Caco-2 (cell line): ENCODE measurements at regions of chr10 and their contacts with region 1.

Region 1: GRCh38 chr10:121096617-121097461 is 245.7 kb downstream of the WDR11 start:
- DNase-seq: peak; percentile 86 to 87
- H3K4me3 ChIP-seq: no peak overlapping the region
- H3K4me3 Mint-ChIP-seq: peak overlapping the region; percentile 48
- H3K27ac Mint-ChIP-seq: peak overlapping the region; percentile 90
- H3K4me1 ChIP-seq: peaks cover 51% of the 10 kb centered on the region
- H3K4me1 Mint-ChIP-seq: peaks cover 38% of the 10 kb centered on the region
- H3K27me3 ChIP-seq: no peaks in the 10 kb centered on the region
- H3K27me3 Mint-ChIP-seq: no peaks in the 10 kb centered on the region
- CTCF ChIP-seq: no peak

Region 2: DNA sequence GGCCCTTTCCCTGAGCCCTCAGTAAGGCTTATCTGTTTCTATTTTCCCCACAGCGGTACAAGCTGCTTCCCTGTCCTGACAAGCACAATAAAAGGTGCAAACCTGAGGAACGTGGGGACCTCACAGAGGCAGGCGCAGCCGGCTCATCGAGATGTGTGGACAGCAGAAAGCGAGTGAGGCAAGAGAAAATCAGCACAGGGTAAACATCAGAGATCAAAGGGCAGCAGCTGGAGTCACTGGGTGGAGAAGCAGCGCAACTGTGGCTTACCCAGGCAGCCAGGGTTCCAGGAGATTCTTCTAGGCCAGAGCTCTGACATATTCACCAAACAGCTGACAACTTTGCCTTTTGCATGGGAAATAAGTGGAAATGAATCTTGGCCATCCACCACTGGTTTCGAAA is 33.1 kb before region 1 on chr10:
- CTCF ChIA-PET with region 1: no interaction called
- POLR2A ChIA-PET with region 1: no interaction called
- intact Hi-C with region 1: loop called (anchors 1 kb)
- DNase-seq: peak; percentile 89 to 90
- H3K4me3 ChIP-seq: no peak overlapping the region
- H3K4me3 Mint-ChIP-seq: peak overlapping the region; percentile 41
- H3K27ac Mint-ChIP-seq: peak overlapping the region; percentile 81
- H3K4me1 ChIP-seq: peaks cover 34% of the 10 kb centered on the region
- H3K4me1 Mint-ChIP-seq: peaks cover 31% of the 10 kb centered on the region
- H3K27me3 ChIP-seq: no peaks in the 10 kb centered on the region
- H3K27me3 Mint-ChIP-seq: no peaks in the 10 kb centered on the region
- CTCF ChIP-seq: no peak

Region 3: GRCh38 chr10:121178996-121179395 is 82.2 kb after region 1 on chr10:
- CTCF ChIA-PET with region 1: no interaction called
- POLR2A ChIA-PET with region 1: no interaction called
- intact Hi-C with region 1: no loop called
- DNase-seq: no peak
- H3K4me3 ChIP-seq: no peak overlapping the region
- H3K4me3 Mint-ChIP-seq: no peak overlapping the region
- H3K27ac Mint-ChIP-seq: no peak overlapping the region
- H3K4me1 ChIP-seq: peaks cover 10% of the 10 kb centered on the region; the same call in 1 of the 2 replicates
- H3K4me1 Mint-ChIP-seq: peaks cover 10% of the 10 kb centered on the region
- H3K27me3 ChIP-seq: no peaks in the 10 kb centered on the region
- H3K27me3 Mint-ChIP-seq: no peaks in the 10 kb centered on the region
- CTCF ChIP-seq: no peak